ENCODE measurements at regions of chr13 and their contacts with region 1.

Region 1: GRCh38 chr13:110116072-110116487 is 190.9 kb downstream of the COL4A1 start:
- DNase-seq: peak; percentile 29
- ATAC-seq: peak; percentile 52
- H3K4me3 Mint-ChIP-seq: no peak overlapping the region
- H3K27ac Mint-ChIP-seq: no peak overlapping the region
- H3K4me1 Mint-ChIP-seq: no peaks in the 10 kb centered on the region
- H3K27me3 Mint-ChIP-seq: peaks cover 12% of the 10 kb centered on the region
- CTCF ChIP-seq: no peak

Region 2: DNA sequence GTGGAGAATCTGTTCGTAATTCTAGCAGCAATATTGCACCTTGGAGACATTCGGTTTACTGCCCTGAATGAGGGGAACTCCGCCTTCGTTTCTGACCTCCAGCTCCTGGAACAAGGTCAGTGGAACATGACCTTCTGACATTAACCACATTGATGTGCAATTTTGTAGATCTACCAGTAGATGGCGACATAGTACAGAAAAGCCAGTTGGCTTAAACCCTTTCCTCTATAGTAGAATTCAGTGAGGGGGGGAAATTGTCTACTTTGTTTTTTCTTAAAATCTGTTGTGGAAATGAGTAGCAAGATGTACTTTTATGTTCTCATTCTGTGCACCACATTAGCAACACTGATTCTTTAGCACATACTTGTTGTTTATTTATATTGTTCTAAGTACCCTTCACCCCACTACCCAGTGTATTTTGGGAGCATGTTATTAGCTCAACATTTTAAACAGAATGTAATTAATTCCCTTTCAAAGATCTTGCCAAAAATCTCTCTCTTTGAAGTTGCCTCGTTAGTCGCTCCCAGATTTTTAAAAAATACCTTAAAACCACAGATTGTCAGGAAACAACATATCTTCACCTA is 1154.4 kb before region 1 on chr13:
- CTCF ChIA-PET with region 1: interaction called, 7 read pairs
- POLR2A ChIA-PET with region 1: no interaction called
- intact Hi-C with region 1: loop called (anchors 1 kb)
- DNase-seq: no peak
- ATAC-seq: peak; percentile 75
- H3K4me3 Mint-ChIP-seq: no peak overlapping the region
- H3K27ac Mint-ChIP-seq: no peak overlapping the region
- H3K4me1 Mint-ChIP-seq: no peaks in the 10 kb centered on the region
- H3K27me3 Mint-ChIP-seq: peaks cover 2% of the 10 kb centered on the region
- CTCF ChIP-seq: peak; percentile 94

Region 3: DNA sequence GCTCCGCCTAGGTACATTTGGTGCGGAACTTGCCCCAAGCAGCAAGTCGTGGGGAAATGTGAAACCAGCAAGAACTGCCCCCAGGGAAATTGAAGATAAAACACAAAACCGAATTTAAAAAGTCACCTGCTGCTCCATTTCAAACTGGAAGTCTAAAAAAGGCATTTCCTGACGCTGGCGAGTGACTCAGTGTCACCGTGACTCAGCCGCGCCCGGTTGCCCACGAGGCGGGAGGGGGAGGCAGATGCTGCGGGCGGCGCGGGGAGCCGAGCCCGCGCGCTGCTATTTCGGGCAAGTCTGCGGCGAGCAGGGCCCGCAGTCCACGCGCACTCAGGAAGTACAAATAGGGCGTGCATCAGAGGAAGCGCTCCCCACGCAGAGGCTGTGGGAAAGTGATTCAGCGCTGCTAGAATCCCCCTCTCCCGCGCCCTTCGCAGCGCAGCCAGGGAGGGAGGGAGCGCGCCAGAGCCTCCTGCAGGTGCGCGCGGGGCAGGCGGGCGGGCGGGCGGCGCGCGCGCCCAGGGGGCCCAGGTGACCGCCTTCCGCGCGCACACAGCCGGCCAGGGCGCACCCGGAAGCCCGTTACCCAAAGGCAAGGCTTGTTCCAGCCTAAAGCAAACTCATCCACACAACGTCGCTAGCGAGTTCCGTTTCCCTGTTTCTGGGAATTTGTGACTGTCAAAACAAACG is 22.1 kb after region 1 on chr13:
- CTCF ChIA-PET with region 1: no interaction called
- POLR2A ChIA-PET with region 1: no interaction called
- intact Hi-C with region 1: no loop called
- DNase-seq: peak; percentile 19
- ATAC-seq: peak; percentile 68
- H3K4me3 Mint-ChIP-seq: peak overlapping the region; percentile 74
- H3K27ac Mint-ChIP-seq: peak overlapping the region; percentile 30
- H3K4me1 Mint-ChIP-seq: peaks cover 10% of the 10 kb centered on the region
- H3K27me3 Mint-ChIP-seq: peaks cover 12% of the 10 kb centered on the region
- CTCF ChIP-seq: no peak